ENCODE measurements at regions of chr10 and their contacts with region 1.

Region 1: DNA sequence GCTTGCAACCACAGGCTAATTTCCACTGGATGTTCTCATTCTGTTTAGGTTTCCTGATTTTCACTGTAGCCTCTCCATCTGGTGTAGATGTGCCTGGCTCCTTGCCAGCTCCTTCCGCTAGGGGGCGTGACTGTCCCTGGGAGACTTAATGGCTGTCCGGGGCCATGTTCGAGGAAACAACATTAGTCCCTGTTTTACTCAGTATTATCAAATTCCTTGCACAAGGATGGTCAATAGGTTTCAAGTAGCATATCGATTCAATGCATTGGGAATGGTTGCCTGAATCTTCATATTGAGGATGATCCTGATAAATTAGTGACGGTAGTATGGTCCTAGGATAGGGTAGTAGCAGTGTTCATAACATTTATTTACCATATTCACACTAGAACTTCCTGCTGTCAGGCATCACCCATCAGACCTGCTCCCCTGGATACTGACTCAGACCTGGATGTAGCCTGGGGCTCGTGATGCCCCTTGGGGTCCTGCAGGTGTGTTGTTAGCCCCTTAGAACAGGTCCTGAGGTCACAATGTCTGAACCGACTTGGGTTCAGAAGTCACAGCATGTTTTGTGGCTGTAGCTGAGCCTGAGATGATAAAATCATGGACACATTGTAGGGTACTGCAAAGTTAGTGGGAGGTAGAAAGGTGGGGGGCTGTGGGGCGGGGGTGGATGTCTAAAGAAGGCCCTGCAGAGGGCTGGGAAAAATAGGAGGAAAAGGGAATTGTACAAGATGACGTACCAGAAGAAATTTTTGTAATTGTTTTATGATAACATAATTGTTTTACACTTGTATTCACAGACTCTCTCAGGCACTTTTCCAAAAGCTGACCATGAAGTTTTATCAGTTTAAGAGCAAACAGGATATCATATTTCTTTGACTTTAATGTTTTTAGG is 8.9 kb upstream of the EXOC6 start:
- DNase-seq: no peak
- H3K4me3 ChIP-seq: no peak overlapping the region
- H3K27ac ChIP-seq: peak overlapping the region in 3 of 4 donors; percentile 6 to 61 (median 45)
- H3K4me1 ChIP-seq: peaks cover 0 to 16% (median 5%) of the 10 kb centered on the region in 3 donors
- H3K27me3 ChIP-seq: peaks cover 0 to 33% (median 0%) of the 10 kb centered on the region in 4 donors
- CTCF ChIP-seq: no peak
- POLR2A ChIP-seq: no peak

Region 2: GRCh38 chr10:92544296-92544695 is 295.1 kb before region 1 on chr10:
- intact Hi-C with region 1: no loop called
- DNase-seq: no peak
- H3K4me3 ChIP-seq: no peak overlapping the region
- H3K27ac ChIP-seq: peak overlapping the region in 1 of 4 donors; percentile 16
- H3K4me1 ChIP-seq: peaks cover 3 to 17% (median 5%) of the 10 kb centered on the region in 3 donors
- H3K27me3 ChIP-seq: no peaks in the 10 kb centered on the region
- CTCF ChIP-seq: no peak
- POLR2A ChIP-seq: no peak

Region 3: GRCh38 chr10:92689663-92690210 is 149.7 kb before region 1 on chr10 and contains the start of gene HHEX:
- intact Hi-C with region 1: loop called (anchors 10 kb)
- DNase-seq: no peak
- H3K4me3 ChIP-seq: peak within 1 kb of the TSS; percentile 59 to 75 (median 68)
- H3K27ac ChIP-seq: peak within 1 kb of the TSS; percentile 72 to 90 (median 83)
- H3K4me1 ChIP-seq: peaks cover 2 to 57% (median 5%) of the 10 kb centered on the region in 3 donors
- H3K27me3 ChIP-seq: peaks cover 0 to 65% (median 2%) of the 10 kb centered on the region in 4 donors
- CTCF ChIP-seq: peak in 2 of 6 experiments; percentile 8 to 9
- POLR2A ChIP-seq: peak in 2 of 4 donors; percentile 79 to 83
- total RNA-seq, gene HHEX: 1.6 to 4.2 (median 3.2) TPM in 3 of 4 donors, not detected in the other

Measured in esophagus squamous epithelium (tissue), 5 donors.